HepG2 (cell line): ENCODE measurements at regions of chr2 and their contacts with region 1.

Region 1: GRCh38 chr2:213151437-213152064 is at the start of gene IKZF2:
- DNase-seq: peak; percentile 71
- ATAC-seq: peak; percentile 89
- H3K4me3 ChIP-seq: peak within 1 kb of the TSS; percentile 72 to 83 (median 80)
- H3K27ac ChIP-seq: no peak within 1 kb of the TSS
- H3K4me1 ChIP-seq: peaks cover 11% of the 10 kb centered on the region; the same call in 1 of the 2 replicates
- H3K27me3 ChIP-seq: peaks cover 0 to 15% of the 10 kb centered on the region in 2 experiments; a peak in 1 of 5 replicates
- CTCF ChIP-seq: no peak
- EP300 ChIP-seq: no peak
- POLR2A ChIP-seq: peak in 1 of 2 experiments; percentile 29; a peak in 1 of 4 replicates
- RAD21 ChIP-seq: peak; percentile 77
- total RNA-seq, gene IKZF2: 0.60 and 0.86 TPM in 2 replicates

Region 2: GRCh38 chr2:212686285-212686895 is 465.2 kb before region 1 on chr2:
- CTCF ChIA-PET with region 1: interaction called, 3 read pairs
- POLR2A ChIA-PET with region 1: no interaction called
- in situ Hi-C with region 1: loop called (anchors 5 kb)
- intact Hi-C with region 1: loop called (anchors 1 kb)
- DNase-seq: peak; percentile 49
- ATAC-seq: peak; percentile 61
- H3K4me3 ChIP-seq: no peak overlapping the region
- H3K27ac ChIP-seq: no peak overlapping the region
- H3K4me1 ChIP-seq: no peaks in the 10 kb centered on the region
- H3K27me3 ChIP-seq: no peaks in the 10 kb centered on the region
- CTCF ChIP-seq: peak; percentile 78
- EP300 ChIP-seq: no peak
- POLR2A ChIP-seq: no peak
- RAD21 ChIP-seq: 0 out of 2 replicates have a peak, but pooled peaks have one; percentile 49

Region 3: DNA sequence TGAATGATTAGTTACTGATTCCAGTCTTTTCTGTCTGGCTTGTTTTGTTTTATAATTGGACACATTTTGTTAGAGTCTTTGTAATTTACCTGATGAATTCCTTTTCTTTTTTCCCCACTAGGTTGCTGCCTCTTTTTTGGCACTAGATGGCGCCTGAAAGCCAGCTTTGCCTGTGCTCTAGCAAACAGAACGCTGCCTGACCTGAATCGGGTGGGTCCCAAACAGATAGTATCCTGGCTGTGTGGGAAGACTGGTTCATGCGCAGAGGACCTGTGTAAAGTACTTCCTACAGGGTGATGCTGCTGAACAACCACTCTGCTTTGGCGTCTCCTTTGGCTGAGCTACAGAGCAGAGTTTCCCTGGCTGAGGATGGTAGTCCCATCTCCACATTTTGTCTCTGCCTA is 288.4 kb before region 1 on chr2:
- CTCF ChIA-PET with region 1: interaction called, 5 read pairs
- POLR2A ChIA-PET with region 1: no interaction called
- in situ Hi-C with region 1: no loop called
- intact Hi-C with region 1: loop called (anchors 1 kb)
- DNase-seq: peak; percentile 28
- ATAC-seq: peak; percentile 75
- H3K4me3 ChIP-seq: no peak overlapping the region
- H3K27ac ChIP-seq: no peak overlapping the region
- H3K4me1 ChIP-seq: no peaks in the 10 kb centered on the region
- H3K27me3 ChIP-seq: no peaks in the 10 kb centered on the region
- CTCF ChIP-seq: peak; percentile 64
- EP300 ChIP-seq: no peak
- POLR2A ChIP-seq: no peak
- RAD21 ChIP-seq: peak; percentile 43

Region 4: DNA sequence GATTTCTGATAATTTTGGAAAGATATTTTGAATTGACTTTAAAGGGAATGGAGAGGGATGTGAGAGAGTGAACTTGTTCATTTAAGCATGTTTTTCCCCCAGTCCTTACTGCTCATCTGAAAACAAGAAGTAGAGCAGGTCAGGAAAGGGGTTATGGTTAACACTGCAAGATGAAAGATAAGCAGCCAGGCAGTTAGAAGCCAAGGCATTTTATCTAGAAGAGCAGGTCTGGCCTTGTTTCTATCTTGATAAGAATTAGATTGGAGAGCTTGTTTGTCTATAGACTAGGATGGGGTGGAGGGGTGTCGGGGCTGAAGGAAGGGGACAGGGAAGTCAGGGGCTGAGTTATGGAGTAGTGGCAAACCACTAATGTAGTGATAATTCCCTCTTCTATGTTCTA is 171.8 kb before region 1 on chr2:
- CTCF ChIA-PET with region 1: no interaction called
- POLR2A ChIA-PET with region 1: no interaction called
- in situ Hi-C with region 1: no loop called
- intact Hi-C with region 1: loop called (anchors 5 kb)
- DNase-seq: no peak
- ATAC-seq: no peak
- H3K4me3 ChIP-seq: no peak overlapping the region
- H3K27ac ChIP-seq: no peak overlapping the region
- H3K4me1 ChIP-seq: no peaks in the 10 kb centered on the region
- H3K27me3 ChIP-seq: no peaks in the 10 kb centered on the region
- CTCF ChIP-seq: no peak
- EP300 ChIP-seq: no peak
- POLR2A ChIP-seq: no peak
- RAD21 ChIP-seq: no peak

Region 5: GRCh38 chr2:213238753-213239495 is 87.4 kb after region 1 on chr2:
- CTCF ChIA-PET with region 1: no interaction called
- POLR2A ChIA-PET with region 1: no interaction called
- in situ Hi-C with region 1: no loop called
- intact Hi-C with region 1: loop called (anchors 2 kb)
- DNase-seq: peak; percentile 97
- ATAC-seq: peak; percentile 96
- H3K4me3 ChIP-seq: peak overlapping the region in 2 of 3 experiments; percentile 19 to 32; a peak in 2 of 6 replicates
- H3K27ac ChIP-seq: peak overlapping the region; percentile 46
- H3K4me1 ChIP-seq: peaks cover 28% of the 10 kb centered on the region
- H3K27me3 ChIP-seq: no peaks in the 10 kb centered on the region
- CTCF ChIP-seq: no peak
- EP300 ChIP-seq: peak; percentile 51 to 88; a peak in 2 of 4 replicates
- POLR2A ChIP-seq: no peak
- RAD21 ChIP-seq: no peak